Heart right ventricle (tissue), 16 donors: ENCODE measurements at regions of chr6 and their contacts with region 1.

Region 1: DNA sequence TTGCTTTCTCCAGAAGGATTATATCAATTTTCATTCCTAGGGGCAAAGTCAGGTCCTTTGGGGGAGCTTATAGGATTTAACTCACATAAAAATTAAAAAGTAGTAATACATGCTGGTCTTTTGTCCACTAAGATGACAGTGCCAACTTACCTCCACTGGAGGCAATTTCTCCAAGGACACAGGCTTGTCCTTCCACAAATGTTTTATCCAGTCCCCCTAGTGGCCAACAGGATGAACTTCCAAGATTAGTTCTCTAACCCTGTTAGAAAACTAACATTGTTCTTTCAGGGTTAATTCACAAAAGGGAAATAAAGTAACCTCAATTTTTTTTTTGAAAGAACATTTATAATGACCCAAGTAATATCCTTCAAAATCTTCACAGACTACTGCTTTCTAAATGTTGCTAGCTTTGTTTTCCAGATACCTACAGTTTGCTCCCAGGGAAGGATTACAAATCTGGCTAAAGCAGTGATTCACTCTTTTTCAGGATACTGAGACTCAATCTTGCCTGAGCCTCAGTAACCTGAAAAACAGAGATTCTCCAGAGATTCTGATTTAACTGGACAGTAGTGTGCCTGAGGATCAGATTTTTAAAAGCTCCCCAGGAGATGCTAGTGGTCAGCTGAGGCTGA is 31.7 kb upstream of the UBR2 start:
- DNase-seq: peak in 1 of 2 donors; percentile 26
- ATAC-seq: peak in 4 of 8 donors; percentile 51 to 69 (median 60)
- H3K4me3 ChIP-seq: no peak overlapping the region
- H3K27ac ChIP-seq: no peak overlapping the region
- H3K4me1 ChIP-seq: peaks cover 0 to 15% (median 5%) of the 10 kb centered on the region in 9 donors
- H3K27me3 ChIP-seq: no peaks in the 10 kb centered on the region
- CTCF ChIP-seq: peak; percentile 78 to 89 (median 88)

Region 2: DNA sequence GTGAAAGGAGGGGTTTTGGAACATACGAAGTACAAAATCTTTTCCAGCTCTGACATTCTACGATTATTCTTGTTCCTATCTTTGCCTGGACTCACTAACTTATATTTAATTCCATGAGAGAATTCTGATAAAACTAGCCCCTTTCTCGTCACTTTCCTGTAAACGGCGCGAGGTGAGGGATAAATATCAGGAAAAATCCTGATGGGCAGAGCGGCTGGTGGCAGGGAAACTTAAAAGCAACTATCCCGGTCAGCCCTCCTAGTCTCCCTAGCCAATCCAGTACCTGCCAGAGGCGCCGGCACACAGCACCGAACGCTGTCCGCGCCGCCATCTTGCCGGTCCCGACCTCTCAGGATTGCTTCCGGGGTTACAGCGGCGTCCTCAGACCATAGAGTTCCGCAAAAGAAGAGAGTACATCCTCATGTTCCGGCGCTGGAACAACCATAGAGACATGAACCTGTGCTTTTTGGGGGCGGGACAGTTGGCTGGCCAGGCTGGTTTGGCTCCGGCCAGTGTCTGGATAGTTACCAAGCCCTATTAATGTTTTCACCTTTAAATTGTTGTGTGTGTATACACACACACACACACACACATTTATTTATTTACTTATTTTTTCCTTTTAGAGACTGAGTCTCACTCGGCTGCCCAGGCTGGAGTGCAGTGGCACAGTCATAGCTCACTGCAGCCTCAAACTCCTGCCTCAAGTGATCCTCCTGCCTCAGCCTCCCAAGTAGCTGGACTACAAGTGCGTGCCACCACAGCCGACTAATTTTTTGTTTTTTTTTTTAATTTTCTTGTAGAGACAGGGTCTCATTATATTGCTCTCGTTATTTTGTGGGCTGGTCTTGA is 314.4 kb before region 1 on chr6 and contains the start of gene MRPS10:
- intact Hi-C with region 1: loop called in 3 of 10 experiments (anchors 5 to 10 kb)
- DNase-seq: peak; percentile 88 to 94
- ATAC-seq: peak; percentile 99 to 100 (median 100)
- H3K4me3 ChIP-seq: peak within 1 kb of the TSS; percentile 59 to 88 (median 77)
- H3K27ac ChIP-seq: peak within 1 kb of the TSS in 9 of 10 donors; percentile 49 to 89 (median 81)
- H3K4me1 ChIP-seq: peaks cover 0 to 28% (median 20%) of the 10 kb centered on the region in 9 donors
- H3K27me3 ChIP-seq: no peaks in the 10 kb centered on the region
- CTCF ChIP-seq: no peak
- total RNA-seq, gene MRPS10: 47.4 to 82.1 (median 63.1) TPM

Region 3: DNA sequence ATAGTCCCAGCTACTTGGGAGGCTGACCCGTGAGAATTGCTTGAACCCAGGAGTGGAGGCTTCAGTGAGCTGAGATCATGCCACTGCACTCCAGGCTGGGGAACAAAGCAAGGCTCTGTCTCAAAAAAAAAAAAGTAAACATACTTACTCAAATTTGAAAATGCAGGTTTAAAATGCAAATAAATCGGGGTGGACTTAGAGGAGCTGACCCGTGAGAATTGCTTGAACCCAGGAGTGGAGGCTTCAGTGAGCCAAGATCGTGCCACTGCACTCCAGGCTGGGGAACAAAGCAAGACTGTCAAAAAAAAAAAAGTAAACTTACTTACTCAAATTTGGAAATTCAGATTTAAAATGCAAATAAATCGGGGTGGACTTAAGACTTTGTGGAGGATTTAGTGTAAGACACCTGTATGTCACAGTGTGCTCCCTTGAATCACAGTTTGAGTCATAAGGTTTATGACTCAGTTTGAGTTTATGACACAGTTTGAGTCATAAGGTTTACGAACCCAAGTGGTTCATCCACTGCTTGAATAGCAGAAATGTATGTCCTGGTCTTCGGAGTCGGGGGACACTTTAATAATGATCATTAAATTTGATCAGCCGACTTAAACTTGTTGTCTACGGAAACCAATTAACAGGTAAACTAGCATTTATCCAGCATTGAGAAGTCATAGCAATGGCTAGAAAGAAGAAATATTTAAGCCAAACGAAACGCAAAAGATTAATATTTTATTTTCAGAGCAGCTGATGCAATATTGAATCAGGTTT is 307.7 kb before region 1 on chr6:
- intact Hi-C with region 1: loop called in 3 of 10 experiments (anchors 5 to 10 kb)
- DNase-seq: no peak
- ATAC-seq: no peak
- H3K4me3 ChIP-seq: no peak overlapping the region
- H3K27ac ChIP-seq: no peak overlapping the region
- H3K4me1 ChIP-seq: peaks cover 0 to 15% (median 0%) of the 10 kb centered on the region in 9 donors
- H3K27me3 ChIP-seq: no peaks in the 10 kb centered on the region
- CTCF ChIP-seq: no peak

Region 4: GRCh38 chr6:42251911-42252637 is 280.1 kb before region 1 on chr6:
- intact Hi-C with region 1: loop called in 1 of 10 experiments (anchors 10 kb)
- DNase-seq: peak; percentile 83 to 84
- ATAC-seq: peak; percentile 80 to 94 (median 88)
- H3K4me3 ChIP-seq: no peak overlapping the region
- H3K27ac ChIP-seq: peak overlapping the region; percentile 25 to 88 (median 76)
- H3K4me1 ChIP-seq: peaks cover 8 to 53% (median 34%) of the 10 kb centered on the region in 9 donors
- H3K27me3 ChIP-seq: peaks cover 0 to 3% (median 0%) of the 10 kb centered on the region in 7 donors
- CTCF ChIP-seq: no peak

Region 5: GRCh38 chr6:42260972-42261371 is 271.2 kb before region 1 on chr6:
- intact Hi-C with region 1: loop called in 5 of 10 experiments (anchors 5 to 10 kb)
- DNase-seq: peak in 1 of 2 donors; percentile 54
- ATAC-seq: peak; percentile 53 to 80 (median 70)
- H3K4me3 ChIP-seq: peak overlapping the region in 1 of 10 donors; percentile 8
- H3K27ac ChIP-seq: peak overlapping the region in 4 of 10 donors; percentile 19 to 46 (median 32)
- H3K4me1 ChIP-seq: peaks cover 6 to 50% (median 16%) of the 10 kb centered on the region in 9 donors
- H3K27me3 ChIP-seq: no peaks in the 10 kb centered on the region
- CTCF ChIP-seq: peak in 8 of 9 donors; percentile 31 to 68 (median 61)

Region 6: GRCh38 chr6:42279144-42279781 is 252.9 kb before region 1 on chr6:
- intact Hi-C with region 1: no loop called
- DNase-seq: peak in 1 of 2 donors; percentile 25
- ATAC-seq: peak in 5 of 8 donors; percentile 20 to 64 (median 54)
- H3K4me3 ChIP-seq: no peak overlapping the region
- H3K27ac ChIP-seq: peak overlapping the region in 8 of 10 donors; percentile 50 to 69 (median 64)
- H3K4me1 ChIP-seq: peaks cover 23 to 67% (median 59%) of the 10 kb centered on the region in 9 donors
- H3K27me3 ChIP-seq: no peaks in the 10 kb centered on the region
- CTCF ChIP-seq: no peak